ENCODE measurements at regions of chr2 and their contacts with region 1.

Region 1: GRCh38 chr2:70086838-70087701 is at the start of gene PCBP1:
- DNase-seq: peak; percentile 97
- ATAC-seq: peak; percentile 93
- total RNA-seq, gene PCBP1: 201 TPM

Region 2: DNA sequence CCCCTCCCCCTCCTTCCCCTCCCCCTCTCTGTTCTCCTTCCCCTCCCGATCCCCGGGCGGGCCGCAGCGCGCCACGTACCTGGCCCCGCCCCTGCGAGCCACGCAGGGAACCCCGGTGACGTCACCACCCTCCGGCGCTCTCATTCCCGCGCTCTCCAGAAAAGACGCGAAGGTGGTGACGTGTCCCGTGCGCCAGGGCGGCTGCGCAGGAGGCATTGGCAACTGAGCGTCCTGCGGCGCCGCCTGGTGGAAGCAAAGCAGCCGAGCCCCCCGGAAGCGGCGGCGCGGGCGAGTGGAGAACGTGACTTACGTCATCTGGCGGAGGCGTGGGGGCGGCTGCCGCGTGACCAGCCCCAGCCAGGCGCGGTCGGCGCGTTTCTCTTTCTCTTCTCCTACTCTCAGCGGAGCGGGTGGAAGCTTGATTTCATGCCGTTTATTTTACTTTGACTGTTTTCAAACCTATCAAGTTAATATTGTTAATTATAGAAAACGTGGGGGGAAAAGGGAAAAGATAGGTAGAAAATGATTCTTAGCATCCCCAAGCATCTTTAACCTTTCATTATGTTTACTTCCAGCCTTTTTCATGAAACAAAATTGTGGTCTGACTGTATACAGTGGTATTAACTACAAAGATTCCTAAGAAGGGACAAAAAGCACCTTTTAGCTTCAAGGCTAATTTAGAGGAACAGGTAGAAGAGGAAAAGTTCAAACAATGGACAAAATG is 55.7 kb after region 1 on chr2:
- intact Hi-C with region 1: loop called (anchors 1 kb)
- DNase-seq: peak; percentile 100
- ATAC-seq: peak; percentile 90